CD4-positive, alpha-beta T cell (primary cell): ENCODE measurements at regions of chr1 and their contacts with region 1.

Region 1: GRCh38 chr1:5448486-5448885 is 543.7 kb downstream of the NPHP4 start:
- DNase-seq: peak in 12 of 14 experiments; percentile 3 to 50 (median 23)
- ATAC-seq: no peak
- H3K4me3 ChIP-seq: no peak overlapping the region
- H3K4me3 Mint-ChIP-seq: no peak overlapping the region
- H3K27ac ChIP-seq: no peak overlapping the region
- H3K27ac Mint-ChIP-seq: no peak overlapping the region
- H3K4me1 ChIP-seq: no peaks in the 10 kb centered on the region
- H3K4me1 Mint-ChIP-seq: no peaks in the 10 kb centered on the region
- H3K27me3 ChIP-seq: peaks cover 0 to 3% of the 10 kb centered on the region in 2 experiments
- H3K27me3 Mint-ChIP-seq: peaks cover 7% of the 10 kb centered on the region
- CTCF ChIP-seq: peak; percentile 15

Region 2: GRCh38 chr1:5165762-5166161 is 282.7 kb before region 1 on chr1:
- CTCF ChIA-PET with region 1: no interaction called
- POLR2A ChIA-PET with region 1: no interaction called
- intact Hi-C with region 1: no loop called
- DNase-seq: no peak
- ATAC-seq: no peak
- H3K4me3 ChIP-seq: no peak overlapping the region
- H3K4me3 Mint-ChIP-seq: no peak overlapping the region
- H3K27ac ChIP-seq: no peak overlapping the region
- H3K27ac Mint-ChIP-seq: no peak overlapping the region
- H3K4me1 ChIP-seq: no peaks in the 10 kb centered on the region
- H3K4me1 Mint-ChIP-seq: no peaks in the 10 kb centered on the region
- H3K27me3 ChIP-seq: no peaks in the 10 kb centered on the region
- H3K27me3 Mint-ChIP-seq: peaks cover 26% of the 10 kb centered on the region
- CTCF ChIP-seq: no peak

Region 3: DNA sequence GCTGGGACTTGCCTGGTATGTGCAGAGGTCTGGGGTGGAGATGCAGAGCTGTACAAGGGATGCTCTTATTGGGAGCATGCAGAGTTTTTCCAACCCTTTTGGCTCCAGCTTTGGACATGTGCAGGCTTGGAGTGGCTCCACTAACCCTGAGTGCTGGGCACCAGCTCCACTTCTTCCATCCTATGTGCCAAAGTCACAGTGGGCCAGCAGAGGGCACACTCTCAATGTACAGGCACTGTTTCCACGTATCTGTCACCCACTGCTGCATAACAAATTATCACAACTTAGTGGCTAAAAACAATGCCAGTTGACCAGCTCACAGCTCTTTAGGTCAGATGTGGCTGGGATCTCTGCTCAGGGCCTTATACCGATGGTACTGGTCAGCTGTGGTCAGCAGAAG is 162.2 kb before region 1 on chr1:
- CTCF ChIA-PET with region 1: interaction called, 4 read pairs
- POLR2A ChIA-PET with region 1: no interaction called
- intact Hi-C with region 1: loop called in 1 of 2 experiments (anchors 1 kb)
- DNase-seq: peak in 10 of 14 experiments; percentile 8 to 65 (median 47)
- ATAC-seq: no peak
- H3K4me3 ChIP-seq: no peak overlapping the region
- H3K4me3 Mint-ChIP-seq: no peak overlapping the region
- H3K27ac ChIP-seq: no peak overlapping the region
- H3K27ac Mint-ChIP-seq: no peak overlapping the region
- H3K4me1 ChIP-seq: no peaks in the 10 kb centered on the region
- H3K4me1 Mint-ChIP-seq: no peaks in the 10 kb centered on the region
- H3K27me3 ChIP-seq: no peaks in the 10 kb centered on the region
- H3K27me3 Mint-ChIP-seq: no peaks in the 10 kb centered on the region
- CTCF ChIP-seq: peak; percentile 21

Region 4: GRCh38 chr1:5430911-5431697 is 17.4 kb before region 1 on chr1:
- CTCF ChIA-PET with region 1: no interaction called
- POLR2A ChIA-PET with region 1: no interaction called
- intact Hi-C with region 1: no loop called
- DNase-seq: no peak
- ATAC-seq: no peak
- H3K4me3 ChIP-seq: no peak overlapping the region
- H3K4me3 Mint-ChIP-seq: no peak overlapping the region
- H3K27ac ChIP-seq: no peak overlapping the region
- H3K27ac Mint-ChIP-seq: no peak overlapping the region
- H3K4me1 ChIP-seq: no peaks in the 10 kb centered on the region
- H3K4me1 Mint-ChIP-seq: no peaks in the 10 kb centered on the region
- H3K27me3 ChIP-seq: peaks cover 0 to 4% of the 10 kb centered on the region in 2 experiments
- H3K27me3 Mint-ChIP-seq: peaks cover 48% of the 10 kb centered on the region
- CTCF ChIP-seq: no peak

Region 5: GRCh38 chr1:5522531-5523145 is 74.2 kb after region 1 on chr1:
- CTCF ChIA-PET with region 1: no interaction called
- POLR2A ChIA-PET with region 1: no interaction called
- intact Hi-C with region 1: no loop called
- DNase-seq: no peak
- ATAC-seq: no peak
- H3K4me3 ChIP-seq: no peak overlapping the region
- H3K4me3 Mint-ChIP-seq: no peak overlapping the region
- H3K27ac ChIP-seq: no peak overlapping the region
- H3K27ac Mint-ChIP-seq: no peak overlapping the region
- H3K4me1 ChIP-seq: no peaks in the 10 kb centered on the region
- H3K4me1 Mint-ChIP-seq: peaks cover 7% of the 10 kb centered on the region
- H3K27me3 ChIP-seq: peaks cover 3% of the 10 kb centered on the region in 2 experiments
- H3K27me3 Mint-ChIP-seq: peaks cover 38% of the 10 kb centered on the region
- CTCF ChIP-seq: no peak